GM10248 (cell line): ENCODE measurements at regions of chr10 and their contacts with region 1.

Region 1: DNA sequence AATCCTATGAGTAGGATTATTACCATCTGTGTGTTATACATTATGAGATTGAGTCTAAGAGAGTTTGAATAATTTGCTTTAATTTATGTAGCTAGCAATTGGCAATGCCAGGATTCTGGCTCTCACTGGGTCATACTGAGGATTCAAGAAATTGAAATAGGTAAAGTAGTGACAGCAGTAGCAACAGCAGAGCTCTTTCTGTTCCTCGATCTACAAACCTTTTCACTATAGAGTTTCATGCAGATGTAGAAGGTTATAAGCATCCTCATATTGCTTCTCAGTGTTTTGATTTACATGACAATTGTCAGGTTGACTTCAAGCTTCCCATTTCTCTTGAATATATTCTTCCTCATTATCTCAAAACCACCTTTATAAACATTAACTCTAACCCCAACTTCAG is 294.1 kb upstream of the CSTF2T start:
- DNase-seq: no peak
- CTCF ChIP-seq: no peak

Region 2: DNA sequence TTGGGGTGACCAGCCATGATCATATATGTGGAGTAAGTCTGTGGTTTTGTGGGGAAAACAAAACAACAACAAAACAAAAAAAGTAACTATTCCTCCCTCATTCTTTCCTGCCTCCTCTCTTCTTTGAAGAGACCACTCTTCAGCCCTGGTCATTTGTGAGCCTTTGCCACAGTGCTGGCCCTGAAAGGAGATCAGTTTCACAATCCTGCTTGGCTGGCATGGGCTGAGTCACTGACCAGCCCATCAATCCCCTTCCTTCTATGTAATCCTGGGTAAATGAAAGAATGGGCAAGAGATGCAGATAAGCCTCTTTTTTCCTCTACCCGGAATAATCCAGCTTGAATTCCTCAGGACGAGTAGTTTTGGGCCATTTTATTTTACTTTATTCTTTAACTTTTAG is 307.7 kb before region 1 on chr10:
- CTCF ChIA-PET with region 1: no interaction called
- POLR2A ChIA-PET with region 1: no interaction called
- DNase-seq: no peak
- CTCF ChIP-seq: no peak

Region 3: DNA sequence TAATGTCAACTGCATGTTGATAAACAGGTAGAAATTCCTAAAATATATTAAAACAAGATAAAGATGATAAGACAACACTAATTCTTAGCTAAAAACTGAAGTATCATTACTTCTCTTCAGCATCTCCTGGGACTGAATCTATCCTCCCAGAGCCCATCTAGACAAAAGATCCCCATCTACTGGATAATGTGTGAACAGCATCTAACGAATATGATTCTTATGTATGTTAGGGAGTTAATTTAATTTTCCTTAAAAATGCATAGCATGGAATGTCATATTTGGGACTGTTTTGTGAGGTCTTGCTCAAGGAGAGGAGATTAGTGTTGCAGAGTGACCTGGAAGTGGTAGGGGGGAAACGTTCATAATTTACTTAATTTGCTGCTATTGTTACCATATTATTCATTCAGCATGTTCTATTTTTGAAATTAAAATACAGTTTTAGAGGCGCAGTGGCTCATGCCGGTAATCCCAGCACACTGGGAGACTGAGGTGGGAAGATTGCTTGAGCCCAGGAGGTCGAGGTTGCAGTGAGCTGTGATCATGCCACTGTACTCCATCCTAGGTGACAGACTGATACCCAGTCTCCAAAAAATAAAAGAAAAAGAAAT is 11.0 kb after region 1 on chr10:
- CTCF ChIA-PET with region 1: interaction called, 10 read pairs
- POLR2A ChIA-PET with region 1: no interaction called
- DNase-seq: peak; percentile 35
- CTCF ChIP-seq: peak; percentile 54